ENCODE measurements at regions of chr7 and their contacts with region 1.

Region 1: DNA sequence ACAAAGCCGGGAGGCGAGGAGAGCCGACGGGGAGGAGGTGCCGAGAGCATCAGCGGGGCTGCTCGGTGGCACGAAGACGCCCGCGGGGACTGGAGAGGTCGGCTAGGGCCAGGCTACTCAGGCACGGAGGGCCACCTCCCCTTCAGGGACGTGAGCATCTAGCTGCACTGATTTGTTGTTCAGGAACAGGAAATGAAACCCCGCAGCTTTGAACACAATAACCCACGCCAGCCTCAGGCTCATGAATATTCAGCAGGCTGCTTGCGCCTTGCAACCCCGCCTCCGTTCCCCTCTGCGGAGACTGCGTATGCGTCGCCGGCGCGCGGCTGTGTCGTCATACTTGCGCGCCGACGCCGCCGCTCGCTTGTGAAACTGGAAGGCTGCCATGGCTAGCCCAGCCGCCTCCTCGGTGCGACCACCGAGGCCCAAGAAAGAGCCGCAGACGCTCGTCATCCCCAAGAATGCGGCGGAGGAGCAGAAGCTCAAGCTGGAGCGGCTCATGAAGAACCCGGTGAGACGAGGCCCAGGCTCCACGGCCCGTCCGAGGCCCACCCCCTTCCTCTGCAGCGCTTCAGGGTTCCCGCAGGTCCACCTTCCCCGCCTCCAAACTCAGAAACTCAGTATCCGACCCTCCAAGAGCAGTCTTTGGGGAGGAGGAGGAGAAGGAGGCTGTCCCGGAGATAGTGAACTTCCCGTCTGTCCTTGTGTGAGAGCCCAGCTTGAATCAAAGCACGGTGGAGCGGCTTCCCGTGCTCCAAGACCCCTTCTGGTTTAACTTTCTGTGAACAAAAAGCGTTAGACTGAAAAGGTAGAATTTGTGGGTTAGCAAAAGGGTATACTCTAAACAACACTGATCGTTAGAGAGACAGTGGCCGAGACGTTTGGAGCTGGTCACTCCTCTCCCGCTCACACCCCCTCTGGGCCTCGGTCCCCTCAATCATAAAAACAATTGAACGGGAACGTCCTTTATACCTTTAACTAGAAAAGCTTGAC is at the start of gene PRKRIP1:
- DNase-seq: peak; percentile 68 to 96 (median 88)

Region 2: GRCh38 chr7:102433219-102434038 is 37.1 kb after region 1 on chr7 and contains the start of gene ORAI2:
- intact Hi-C with region 1: loop called (anchors 2 kb)
- DNase-seq: peak; percentile 42 to 96 (median 90)

Region 3: GRCh38 chr7:102464577-102465280 is 68.4 kb after region 1 on chr7 and contains the starts of genes ALKBH4 and LRWD1:
- intact Hi-C with region 1: loop called (anchors 5 kb)
- DNase-seq: peak; percentile 80 to 96 (median 93)

Measured in head of caudate nucleus (tissue), 42 donors.